Breast epithelium (tissue), 4 donors: ENCODE measurements at regions of chr11 and their contacts with region 1.

Region 1: GRCh38 chr11:75867775-75868374 is 52.9 kb downstream of the UVRAG start:
- DNase-seq: no peak
- H3K4me3 ChIP-seq: no peak overlapping the region
- H3K27ac ChIP-seq: no peak overlapping the region
- H3K4me1 ChIP-seq: peaks cover 0 to 9% of the 10 kb centered on the region in 2 donors
- H3K27me3 ChIP-seq: no peaks in the 10 kb centered on the region
- CTCF ChIP-seq: peak; percentile 75 to 86 (median 82)
- POLR2A ChIP-seq: no peak

Region 2: DNA sequence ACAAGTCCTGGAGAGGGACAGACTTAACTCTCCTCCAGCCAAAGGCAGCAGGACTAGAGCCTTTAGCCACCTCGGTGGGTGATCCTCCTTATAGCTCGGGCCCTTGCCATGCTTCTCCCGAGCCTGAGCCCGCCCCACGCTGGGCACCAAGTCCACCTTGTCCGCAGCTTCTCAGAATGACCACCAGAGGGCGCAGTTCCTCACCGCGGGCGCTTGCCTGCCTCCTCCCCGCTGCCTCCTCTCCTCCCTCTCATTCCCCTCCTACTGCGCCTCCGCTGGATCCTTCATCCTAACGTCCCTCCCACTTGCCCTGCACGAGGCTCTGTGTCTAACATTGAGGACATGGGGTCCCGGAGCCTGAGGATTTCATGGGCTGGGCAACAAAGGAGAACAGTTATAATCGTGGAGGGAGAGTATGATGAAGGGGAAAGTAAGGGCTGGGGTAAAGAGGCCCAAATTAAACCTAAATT is 161.6 kb before region 1 on chr11:
- intact Hi-C with region 1: loop called (anchors 5 kb)
- DNase-seq: peak in 1 of 2 donors; percentile 29
- H3K4me3 ChIP-seq: peak overlapping the region in 2 of 3 donors; percentile 12 to 45
- H3K27ac ChIP-seq: no peak overlapping the region
- H3K4me1 ChIP-seq: no peaks in the 10 kb centered on the region
- H3K27me3 ChIP-seq: no peaks in the 10 kb centered on the region
- CTCF ChIP-seq: peak; percentile 71 to 90 (median 79)
- POLR2A ChIP-seq: no peak

Region 3: DNA sequence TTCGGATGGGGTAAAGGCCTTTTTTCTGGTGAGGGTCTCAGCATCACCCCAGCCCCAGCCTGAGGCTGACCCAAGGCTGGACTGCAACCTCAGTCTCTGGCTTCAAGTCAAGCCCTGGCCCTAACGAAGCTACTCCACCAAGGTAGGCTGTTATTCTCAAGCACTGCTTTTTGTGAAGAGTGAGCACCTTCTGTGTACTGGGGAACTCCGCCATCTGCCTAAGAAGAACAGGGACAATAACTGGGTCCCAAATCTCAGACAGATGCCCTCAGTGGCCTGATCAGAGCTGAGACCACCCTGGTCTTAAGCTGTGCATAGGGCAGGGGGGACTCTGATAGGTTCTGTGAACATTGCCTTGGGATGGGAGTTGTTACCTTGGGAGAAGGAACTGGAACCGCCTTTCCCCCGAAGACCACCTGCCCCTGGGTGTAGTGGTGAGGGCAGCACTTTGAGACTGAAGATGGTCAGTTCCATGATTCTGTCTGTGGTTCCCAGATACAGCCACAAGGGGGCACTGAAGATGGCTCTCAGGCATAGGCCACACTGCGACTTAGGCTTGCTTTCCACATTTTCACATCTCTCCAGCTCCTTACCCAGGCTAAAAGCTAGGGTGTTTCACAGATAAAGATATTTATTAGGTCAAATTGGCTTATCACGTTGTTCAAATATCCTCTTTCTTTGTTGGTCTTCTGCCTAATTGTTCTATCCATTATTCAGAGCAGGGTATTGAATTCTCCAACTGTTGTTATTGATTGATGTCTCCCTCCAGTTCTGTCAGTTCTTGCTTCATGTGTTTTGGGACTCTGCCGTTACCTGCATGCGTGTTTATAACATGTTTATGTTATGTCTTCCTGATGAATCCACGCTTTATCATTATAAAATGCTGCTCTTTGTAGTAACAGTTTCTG is 64.7 kb before region 1 on chr11:
- intact Hi-C with region 1: loop called (anchors 5 kb)
- DNase-seq: peak; percentile 69 to 76
- H3K4me3 ChIP-seq: no peak overlapping the region
- H3K27ac ChIP-seq: peak overlapping the region; percentile 85 to 89
- H3K4me1 ChIP-seq: peaks cover 9 to 18% of the 10 kb centered on the region in 2 donors
- H3K27me3 ChIP-seq: no peaks in the 10 kb centered on the region
- CTCF ChIP-seq: peak; percentile 90 to 93 (median 92)
- POLR2A ChIP-seq: no peak

Region 4: GRCh38 chr11:75946531-75947530 is 79.0 kb after region 1 on chr11:
- intact Hi-C with region 1: no loop called
- DNase-seq: no peak
- H3K4me3 ChIP-seq: no peak overlapping the region
- H3K27ac ChIP-seq: peak overlapping the region; percentile 27 to 71
- H3K4me1 ChIP-seq: peaks cover 3 to 12% of the 10 kb centered on the region in 2 donors
- H3K27me3 ChIP-seq: no peaks in the 10 kb centered on the region
- CTCF ChIP-seq: no peak
- POLR2A ChIP-seq: no peak

Region 5: GRCh38 chr11:76148941-76149613 is 281.2 kb after region 1 on chr11:
- intact Hi-C with region 1: no loop called
- DNase-seq: no peak
- H3K4me3 ChIP-seq: no peak overlapping the region
- H3K27ac ChIP-seq: no peak overlapping the region
- H3K4me1 ChIP-seq: no peaks in the 10 kb centered on the region
- H3K27me3 ChIP-seq: no peaks in the 10 kb centered on the region
- CTCF ChIP-seq: no peak
- POLR2A ChIP-seq: no peak

Region 6: DNA sequence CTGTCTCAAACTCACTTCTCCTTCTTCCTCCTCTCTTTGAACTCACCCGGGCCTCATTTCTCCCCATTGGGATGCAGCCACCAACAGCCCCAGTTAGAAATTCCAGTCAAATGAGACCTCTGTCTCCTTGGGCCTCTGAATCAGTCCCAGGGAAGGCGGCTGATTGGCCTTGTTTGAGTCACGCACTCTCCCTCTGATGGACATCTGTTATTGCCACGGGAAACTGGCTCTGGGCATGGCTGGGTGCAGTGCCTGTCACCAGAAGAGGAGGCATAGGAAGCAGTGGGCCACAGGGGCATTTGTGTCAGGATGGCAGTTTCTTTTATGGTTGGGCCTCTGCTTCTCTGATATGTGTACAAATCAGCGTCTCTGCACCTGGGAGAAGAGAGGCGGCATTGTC is 348.1 kb after region 1 on chr11:
- intact Hi-C with region 1: no loop called
- DNase-seq: no peak
- H3K4me3 ChIP-seq: no peak overlapping the region
- H3K27ac ChIP-seq: no peak overlapping the region
- H3K4me1 ChIP-seq: no peaks in the 10 kb centered on the region
- H3K27me3 ChIP-seq: peaks cover 0 to 7% of the 10 kb centered on the region in 2 donors
- CTCF ChIP-seq: no peak
- POLR2A ChIP-seq: no peak